ENCODE measurements at regions of chr3 and their contacts with region 1.

Region 1: DNA sequence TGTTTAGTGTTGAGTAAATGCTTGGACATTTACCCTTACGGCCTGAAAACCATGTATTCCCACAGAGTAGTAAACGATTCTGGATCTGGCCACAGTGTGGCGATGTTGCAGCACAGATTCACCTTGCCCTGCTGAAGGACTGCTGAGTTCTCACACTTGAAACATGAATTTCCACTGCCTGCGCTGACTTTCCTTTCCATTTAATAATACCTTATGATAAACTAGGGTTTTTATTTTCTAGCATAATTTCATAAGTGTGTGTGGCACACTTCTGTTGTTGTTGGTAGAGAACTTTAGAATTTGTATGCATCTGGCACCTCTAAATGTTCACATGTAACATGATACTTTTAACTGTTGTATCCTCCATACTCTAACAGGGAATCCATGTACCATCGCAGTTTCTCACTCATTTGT is 53.9 kb downstream of the C3orf38 start:
- DNase-seq: peak; percentile 72
- H3K4me3 ChIP-seq: no peak overlapping the region
- H3K27ac ChIP-seq: no peak overlapping the region
- H3K4me1 ChIP-seq: no peaks in the 10 kb centered on the region
- H3K27me3 ChIP-seq: no peaks in the 10 kb centered on the region
- CTCF ChIP-seq: peak; percentile 72 to 75
- POLR2A ChIP-seq: no peak

Region 2: GRCh38 chr3:88149101-88149508 is 54.5 kb before region 1 on chr3:
- CTCF ChIA-PET with region 1: no interaction called
- POLR2A ChIA-PET with region 1: no interaction called
- dilution Hi-C with region 1: no loop called
- intact Hi-C with region 1: no loop called
- DNase-seq: no peak
- H3K4me3 ChIP-seq: peak overlapping the region; percentile 92 to 100 (median 96)
- H3K27ac ChIP-seq: peak overlapping the region; percentile 32
- H3K4me1 ChIP-seq: peaks cover 13% of the 10 kb centered on the region
- H3K27me3 ChIP-seq: no peaks in the 10 kb centered on the region
- CTCF ChIP-seq: no peak
- POLR2A ChIP-seq: no peak

Region 3: GRCh38 chr3:90091204-90091924 is 1887.7 kb after region 1 on chr3:
- CTCF ChIA-PET with region 1: no interaction called
- POLR2A ChIA-PET with region 1: no interaction called
- dilution Hi-C with region 1: no loop called
- intact Hi-C with region 1: loop called (anchors 5 kb)
- DNase-seq: no peak
- H3K4me3 ChIP-seq: no peak overlapping the region
- H3K27ac ChIP-seq: no peak overlapping the region
- H3K4me1 ChIP-seq: no peaks in the 10 kb centered on the region
- H3K27me3 ChIP-seq: no peaks in the 10 kb centered on the region
- CTCF ChIP-seq: no peak
- POLR2A ChIP-seq: no peak

Region 4: GRCh38 chr3:90184861-90185260 is 1981.2 kb after region 1 on chr3:
- CTCF ChIA-PET with region 1: interaction called, 6 read pairs
- POLR2A ChIA-PET with region 1: no interaction called
- dilution Hi-C with region 1: no loop called
- intact Hi-C with region 1: loop called (anchors 5 kb)
- DNase-seq: no peak
- H3K4me3 ChIP-seq: no peak overlapping the region
- H3K27ac ChIP-seq: no peak overlapping the region
- H3K4me1 ChIP-seq: no peaks in the 10 kb centered on the region
- H3K27me3 ChIP-seq: no peaks in the 10 kb centered on the region
- CTCF ChIP-seq: no peak
- POLR2A ChIP-seq: no peak